Activated CD8-positive, alpha-beta T cell treated with anti-CD3 and anti-CD28 coated beads, Interleukin-2, amount 10 ng/mL, durations not matched to agents 7 days and 5 days (primary cell): ENCODE measurements at regions of chr10 and their contacts with region 1.

Region 1: GRCh38 chr10:89414146-89414878 is at the start of gene IFIT5:
- DNase-seq: peak; percentile 76
- ATAC-seq: peak; percentile 83
- H3K4me3 Mint-ChIP-seq: peak within 1 kb of the TSS; percentile 85
- H3K27ac Mint-ChIP-seq: peak within 1 kb of the TSS; percentile 97
- H3K4me1 Mint-ChIP-seq: peaks cover 53% of the 10 kb centered on the region
- H3K27me3 Mint-ChIP-seq: no peaks in the 10 kb centered on the region
- total RNA-seq, gene IFIT5: 22.5 to 22.7 TPM

Region 2: DNA sequence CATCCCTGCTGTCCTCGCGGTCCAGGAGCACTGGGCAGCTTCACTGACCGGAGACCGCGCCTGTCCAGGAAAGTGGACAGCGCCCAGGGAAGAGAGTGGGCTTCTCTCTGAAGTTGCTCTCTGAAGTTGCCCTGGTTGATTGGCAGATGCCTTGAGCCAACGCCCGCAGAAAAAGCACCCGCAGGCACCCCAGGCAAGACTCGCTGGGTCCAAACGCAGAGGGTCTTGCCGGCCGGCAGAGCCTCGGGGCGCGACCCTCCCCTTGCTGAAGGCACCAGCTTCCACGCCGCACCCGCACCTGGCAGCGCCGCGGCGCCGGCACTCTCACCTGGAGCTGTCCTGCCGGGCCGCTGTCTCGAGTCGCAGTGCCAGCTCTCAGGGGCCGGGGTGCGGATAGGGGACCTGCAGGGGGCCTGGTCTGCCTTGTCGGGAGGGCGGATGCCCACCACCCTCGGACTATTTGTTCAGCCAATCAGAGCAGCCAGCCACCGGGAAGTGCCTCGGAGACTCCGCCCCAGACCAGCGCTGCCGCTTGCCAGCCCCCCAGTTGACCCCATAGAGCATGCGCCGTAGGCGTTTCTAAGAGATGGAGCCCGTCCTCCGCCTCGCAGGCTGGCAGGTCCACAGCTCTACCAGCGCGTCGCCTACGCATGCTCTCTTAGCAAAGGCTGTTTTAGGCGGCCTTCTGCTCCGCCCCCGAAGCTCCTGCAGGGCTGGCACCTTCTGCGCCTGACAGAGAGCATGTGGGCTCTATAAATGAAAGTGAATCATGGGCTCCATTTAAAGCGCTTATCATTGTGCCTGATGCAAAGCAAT is 162.7 kb before region 1 on chr10 and contains the start of gene LIPA:
- CTCF ChIA-PET with region 1: interaction called, 4 read pairs
- POLR2A ChIA-PET with region 1: interaction called, 11 read pairs
- DNase-seq: peak; percentile 97
- ATAC-seq: peak; percentile 100
- H3K4me3 Mint-ChIP-seq: peak within 1 kb of the TSS; percentile 88
- H3K27ac Mint-ChIP-seq: peak within 1 kb of the TSS; percentile 39
- H3K4me1 Mint-ChIP-seq: peaks cover 23% of the 10 kb centered on the region
- H3K27me3 Mint-ChIP-seq: no peaks in the 10 kb centered on the region
- total RNA-seq, gene LIPA: 23.5 to 29.2 TPM

Region 3: GRCh38 chr10:89327784-89328441 is 86.4 kb before region 1 on chr10 and contains the start of gene IFIT3:
- CTCF ChIA-PET with region 1: interaction called, 4 read pairs
- POLR2A ChIA-PET with region 1: interaction called, 19 read pairs
- DNase-seq: peak; percentile 48
- ATAC-seq: peak; percentile 42
- H3K4me3 Mint-ChIP-seq: peak within 1 kb of the TSS; percentile 93
- H3K27ac Mint-ChIP-seq: peak within 1 kb of the TSS; percentile 96
- H3K4me1 Mint-ChIP-seq: peaks cover 63% of the 10 kb centered on the region
- H3K27me3 Mint-ChIP-seq: no peaks in the 10 kb centered on the region
- total RNA-seq, gene IFIT3: 42.8 to 43.7 TPM

Region 4: GRCh38 chr10:89360157-89360556 is 54.2 kb before region 1 on chr10:
- CTCF ChIA-PET with region 1: no interaction called
- POLR2A ChIA-PET with region 1: no interaction called
- DNase-seq: no peak
- ATAC-seq: no peak
- H3K4me3 Mint-ChIP-seq: no peak overlapping the region
- H3K27ac Mint-ChIP-seq: no peak overlapping the region
- H3K4me1 Mint-ChIP-seq: peaks cover 12% of the 10 kb centered on the region
- H3K27me3 Mint-ChIP-seq: peaks cover 7% of the 10 kb centered on the region